Mammary epithelial cell (primary cell): ENCODE measurements at regions of chr7 and their contacts with region 1.

Region 1: DNA sequence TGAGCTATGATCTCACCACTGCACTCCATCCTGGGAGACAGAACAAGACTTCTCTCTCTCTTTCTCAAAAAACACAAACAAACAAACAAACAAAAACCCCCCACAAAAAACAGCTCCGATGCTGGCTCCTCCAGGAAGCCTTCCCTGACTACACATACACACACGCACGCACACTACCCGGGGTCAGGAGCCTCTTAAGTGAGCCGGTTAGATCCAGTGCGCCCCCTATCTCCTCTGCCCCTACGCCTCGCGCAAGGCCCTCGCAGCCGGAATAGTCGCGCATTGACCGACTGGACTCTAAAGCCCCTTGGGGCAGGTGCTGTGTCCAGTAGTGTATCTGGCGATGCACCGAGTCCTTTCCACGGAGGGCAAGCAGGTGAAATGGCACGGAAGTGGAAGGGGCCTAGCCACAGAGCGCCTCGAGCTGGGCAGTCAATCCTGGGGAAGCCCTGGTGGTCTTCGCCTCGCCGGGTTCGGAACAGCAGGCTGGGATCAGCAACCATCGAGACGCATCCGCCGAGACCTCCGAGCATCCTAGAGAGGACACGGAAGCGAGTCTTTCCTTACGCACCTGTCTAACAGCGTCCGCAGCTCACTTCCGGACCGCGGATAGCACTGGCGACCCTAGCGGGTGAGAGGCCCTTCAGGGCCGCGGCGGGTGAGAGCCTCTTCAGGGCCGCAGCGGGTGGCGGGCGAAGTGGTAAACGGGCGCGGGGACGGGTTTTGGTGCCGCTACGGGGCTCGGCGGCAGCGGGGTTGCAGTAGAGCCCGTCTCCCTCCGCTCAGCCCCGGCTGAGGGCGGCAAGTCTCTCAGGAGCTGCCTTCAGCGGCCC is at the start of gene ZSCAN25:
- DNase-seq: peak; percentile 87
- H3K4me3 ChIP-seq: peak within 1 kb of the TSS; percentile 50 to 92 (median 84)
- H3K27ac ChIP-seq: peak within 1 kb of the TSS; percentile 75
- H3K4me1 ChIP-seq: peaks cover 24% of the 10 kb centered on the region
- H3K27me3 ChIP-seq: no peaks in the 10 kb centered on the region
- CTCF ChIP-seq: peak in 1 of 2 donors; percentile 30
- total RNA-seq, gene ZSCAN25: 18.8 to 24.2 TPM

Region 2: GRCh38 chr7:98949336-98950044 is 667.1 kb before region 1 on chr7:
- CTCF ChIA-PET with region 1: no interaction called
- dilution Hi-C with region 1: no loop called
- in situ Hi-C with region 1: no loop called
- intact Hi-C with region 1: no loop called
- DNase-seq: no peak
- H3K4me3 ChIP-seq: no peak overlapping the region
- H3K27ac ChIP-seq: no peak overlapping the region
- H3K4me1 ChIP-seq: no peaks in the 10 kb centered on the region
- H3K27me3 ChIP-seq: no peaks in the 10 kb centered on the region
- CTCF ChIP-seq: no peak

Region 3: GRCh38 chr7:99504603-99505323 is 111.8 kb before region 1 on chr7 and contains the start of gene ZKSCAN5:
- CTCF ChIA-PET with region 1: no interaction called
- dilution Hi-C with region 1: no loop called
- in situ Hi-C with region 1: loop called in 1 of 2 experiments (anchors 10 kb)
- intact Hi-C with region 1: loop called (anchors 5 kb)
- DNase-seq: peak; percentile 96
- H3K4me3 ChIP-seq: peak within 1 kb of the TSS; percentile 82 to 97 (median 90)
- H3K27ac ChIP-seq: peak within 1 kb of the TSS; percentile 65
- H3K4me1 ChIP-seq: peaks cover 7% of the 10 kb centered on the region
- H3K27me3 ChIP-seq: no peaks in the 10 kb centered on the region
- CTCF ChIP-seq: peak in 1 of 2 donors; percentile 9
- total RNA-seq, gene ZKSCAN5: 11.7 to 11.9 TPM

Region 4: DNA sequence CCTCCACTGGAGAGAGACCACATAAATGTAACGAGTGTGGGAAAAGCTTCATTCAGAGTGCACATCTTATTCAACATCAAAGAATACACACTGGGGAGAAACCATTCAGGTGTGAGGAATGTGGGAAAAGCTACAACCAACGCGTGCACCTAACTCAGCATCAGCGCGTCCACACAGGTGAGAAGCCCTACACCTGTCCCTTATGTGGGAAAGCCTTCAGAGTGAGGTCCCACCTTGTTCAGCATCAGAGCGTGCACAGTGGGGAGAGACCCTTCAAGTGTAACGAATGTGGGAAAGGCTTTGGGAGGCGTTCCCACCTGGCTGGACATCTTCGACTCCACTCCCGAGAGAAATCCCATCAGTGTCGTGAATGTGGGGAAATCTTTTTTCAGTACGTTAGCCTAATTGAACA is 85.2 kb before region 1 on chr7:
- CTCF ChIA-PET with region 1: no interaction called
- dilution Hi-C with region 1: loop called (anchors 5 kb)
- in situ Hi-C with region 1: no loop called
- intact Hi-C with region 1: no loop called
- DNase-seq: no peak
- H3K4me3 ChIP-seq: no peak overlapping the region
- H3K27ac ChIP-seq: no peak overlapping the region
- H3K4me1 ChIP-seq: no peaks in the 10 kb centered on the region
- H3K27me3 ChIP-seq: no peaks in the 10 kb centered on the region
- CTCF ChIP-seq: no peak

Region 5: DNA sequence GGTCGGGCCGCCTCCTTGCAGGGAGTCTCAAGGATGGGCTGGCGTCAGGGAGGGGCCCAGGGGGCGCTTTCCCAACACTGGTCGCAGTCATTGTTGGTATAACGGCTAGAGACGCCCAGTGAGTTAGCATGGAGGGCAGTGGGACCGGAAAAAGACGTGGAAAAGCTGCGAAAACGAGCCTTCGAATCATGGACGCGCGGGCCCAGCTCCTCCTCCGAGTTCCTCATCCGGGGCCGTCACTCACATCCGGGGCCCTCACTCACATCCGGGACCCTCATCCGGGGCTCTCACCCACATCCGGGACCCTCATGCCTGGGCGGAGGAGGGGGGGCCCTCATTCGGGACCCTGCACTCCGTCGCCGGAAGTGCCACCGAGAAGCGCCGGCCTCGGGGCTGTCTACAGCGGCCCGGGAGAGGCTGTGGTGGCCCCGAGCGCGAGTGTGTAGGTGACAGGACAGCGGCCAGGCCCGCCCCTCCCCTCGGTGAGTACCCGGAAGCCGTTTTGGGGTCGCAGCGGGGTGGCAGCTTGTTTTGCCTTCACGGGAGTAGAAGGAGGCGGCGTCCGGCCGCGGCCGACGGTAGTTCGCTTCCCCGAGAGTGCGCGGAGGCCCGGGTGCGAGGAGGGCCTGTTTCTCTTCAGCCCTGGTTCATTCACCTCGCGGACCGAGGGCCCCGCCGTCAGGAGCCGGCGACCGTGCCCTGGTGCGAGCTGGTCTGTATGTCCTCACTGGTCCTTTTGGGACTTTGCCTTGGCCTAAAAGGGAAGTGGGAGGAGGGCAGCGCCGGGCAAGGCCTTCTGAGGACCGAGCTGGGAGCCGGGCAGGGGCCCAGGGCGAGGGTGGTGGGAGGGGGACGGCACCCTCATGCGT is 58.0 kb before region 1 on chr7 and contains the start of gene ZNF655:
- CTCF ChIA-PET with region 1: no interaction called
- dilution Hi-C with region 1: no loop called
- in situ Hi-C with region 1: loop called in 1 of 2 experiments (anchors 5 kb)
- intact Hi-C with region 1: loop called (anchors 2 kb)
- DNase-seq: peak; percentile 73
- H3K4me3 ChIP-seq: peak within 1 kb of the TSS; percentile 78 to 81 (median 81)
- H3K27ac ChIP-seq: peak within 1 kb of the TSS; percentile 73
- H3K4me1 ChIP-seq: peaks cover 43% of the 10 kb centered on the region
- H3K27me3 ChIP-seq: no peaks in the 10 kb centered on the region
- CTCF ChIP-seq: no peak
- total RNA-seq, gene ZNF655: 64.5 to 66.0 TPM

Region 6: GRCh38 chr7:99579956-99580777 is 36.4 kb before region 1 on chr7:
- CTCF ChIA-PET with region 1: no interaction called
- dilution Hi-C with region 1: loop called (anchors 5 kb)
- in situ Hi-C with region 1: no loop called
- intact Hi-C with region 1: no loop called
- DNase-seq: no peak
- H3K4me3 ChIP-seq: peak overlapping the region; percentile 41 to 49 (median 47)
- H3K27ac ChIP-seq: no peak overlapping the region
- H3K4me1 ChIP-seq: peaks cover 7% of the 10 kb centered on the region
- H3K27me3 ChIP-seq: no peaks in the 10 kb centered on the region
- CTCF ChIP-seq: peak in 1 of 2 donors; percentile 35

Region 7: GRCh38 chr7:99740573-99741440 is 124.2 kb after region 1 on chr7:
- CTCF ChIA-PET with region 1: no interaction called
- dilution Hi-C with region 1: no loop called
- in situ Hi-C with region 1: no loop called
- intact Hi-C with region 1: loop called (anchors 2 kb)
- DNase-seq: peak; percentile 70
- H3K4me3 ChIP-seq: no peak overlapping the region
- H3K27ac ChIP-seq: no peak overlapping the region
- H3K4me1 ChIP-seq: peaks cover 30% of the 10 kb centered on the region
- H3K27me3 ChIP-seq: no peaks in the 10 kb centered on the region
- CTCF ChIP-seq: no peak

Region 8: DNA sequence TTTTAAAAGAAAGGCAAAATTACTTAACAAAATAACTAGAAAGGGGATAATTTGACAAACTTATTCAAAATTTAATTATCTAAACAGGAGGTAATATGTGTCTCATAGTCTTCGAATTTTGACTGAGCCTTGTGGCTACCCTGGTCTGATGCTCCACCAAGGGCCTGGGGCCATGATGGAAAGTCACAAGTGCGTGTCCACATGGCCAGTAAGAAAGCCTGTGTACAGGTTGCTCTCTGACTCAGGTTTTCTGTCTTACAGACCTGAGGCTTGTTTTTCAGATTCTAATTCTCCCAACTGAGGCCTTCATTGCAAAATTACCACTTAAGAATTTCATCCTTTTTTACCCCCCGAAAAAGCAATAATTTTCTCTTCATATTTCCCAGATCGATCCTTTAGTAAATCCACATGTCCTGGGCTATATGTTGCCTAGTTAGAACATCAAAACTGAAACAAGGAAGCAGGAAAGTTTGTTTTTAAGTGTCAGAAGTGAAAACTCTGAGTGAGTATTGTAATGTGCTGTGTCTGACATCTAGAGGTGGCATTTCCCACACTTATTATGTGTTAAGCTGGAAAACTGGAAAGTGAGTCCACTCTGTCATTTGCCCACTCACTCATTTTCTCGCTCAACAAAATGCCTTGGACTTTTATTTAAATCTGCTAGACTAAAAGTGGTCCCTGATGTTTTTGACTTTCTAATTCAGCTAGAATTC is 221.2 kb after region 1 on chr7:
- CTCF ChIA-PET with region 1: no interaction called
- dilution Hi-C with region 1: no loop called
- in situ Hi-C with region 1: no loop called
- intact Hi-C with region 1: loop called (anchors 5 kb)
- DNase-seq: peak; percentile 16
- H3K4me3 ChIP-seq: no peak overlapping the region
- H3K27ac ChIP-seq: no peak overlapping the region
- H3K4me1 ChIP-seq: peaks cover 3% of the 10 kb centered on the region
- H3K27me3 ChIP-seq: no peaks in the 10 kb centered on the region
- CTCF ChIP-seq: peak; percentile 25 to 61